ENCODE measurements at regions of chr9 and their contacts with region 1.

Region 1: GRCh38 chr9:89701221-89701798 is 96.5 kb downstream of the GADD45G start:
- DNase-seq: peak; percentile 15 to 91 (median 42)
- ATAC-seq: peak; percentile 92
- H3K4me3 ChIP-seq: peak overlapping the region; percentile 28
- H3K4me3 Mint-ChIP-seq: peak overlapping the region; percentile 46
- H3K27ac ChIP-seq: peak overlapping the region in 1 of 2 donors; percentile 36
- H3K27ac Mint-ChIP-seq: peak overlapping the region; percentile 44
- H3K4me1 ChIP-seq: peaks cover 21% of the 10 kb centered on the region
- H3K4me1 Mint-ChIP-seq: peaks cover 16% of the 10 kb centered on the region
- H3K27me3 ChIP-seq: no peaks in the 10 kb centered on the region
- H3K27me3 Mint-ChIP-seq: no peaks in the 10 kb centered on the region
- CTCF ChIP-seq: no peak

Region 2: GRCh38 chr9:89732295-89732938 is 31.1 kb after region 1 on chr9:
- CTCF ChIA-PET with region 1: no interaction called
- POLR2A ChIA-PET with region 1: no interaction called
- intact Hi-C with region 1: no loop called
- DNase-seq: no peak
- ATAC-seq: no peak
- H3K4me3 ChIP-seq: no peak overlapping the region
- H3K4me3 Mint-ChIP-seq: no peak overlapping the region
- H3K27ac ChIP-seq: no peak overlapping the region
- H3K27ac Mint-ChIP-seq: no peak overlapping the region
- H3K4me1 ChIP-seq: peaks cover 10% of the 10 kb centered on the region
- H3K4me1 Mint-ChIP-seq: peaks cover 6% of the 10 kb centered on the region
- H3K27me3 ChIP-seq: no peaks in the 10 kb centered on the region
- H3K27me3 Mint-ChIP-seq: no peaks in the 10 kb centered on the region
- CTCF ChIP-seq: no peak

Region 3: DNA sequence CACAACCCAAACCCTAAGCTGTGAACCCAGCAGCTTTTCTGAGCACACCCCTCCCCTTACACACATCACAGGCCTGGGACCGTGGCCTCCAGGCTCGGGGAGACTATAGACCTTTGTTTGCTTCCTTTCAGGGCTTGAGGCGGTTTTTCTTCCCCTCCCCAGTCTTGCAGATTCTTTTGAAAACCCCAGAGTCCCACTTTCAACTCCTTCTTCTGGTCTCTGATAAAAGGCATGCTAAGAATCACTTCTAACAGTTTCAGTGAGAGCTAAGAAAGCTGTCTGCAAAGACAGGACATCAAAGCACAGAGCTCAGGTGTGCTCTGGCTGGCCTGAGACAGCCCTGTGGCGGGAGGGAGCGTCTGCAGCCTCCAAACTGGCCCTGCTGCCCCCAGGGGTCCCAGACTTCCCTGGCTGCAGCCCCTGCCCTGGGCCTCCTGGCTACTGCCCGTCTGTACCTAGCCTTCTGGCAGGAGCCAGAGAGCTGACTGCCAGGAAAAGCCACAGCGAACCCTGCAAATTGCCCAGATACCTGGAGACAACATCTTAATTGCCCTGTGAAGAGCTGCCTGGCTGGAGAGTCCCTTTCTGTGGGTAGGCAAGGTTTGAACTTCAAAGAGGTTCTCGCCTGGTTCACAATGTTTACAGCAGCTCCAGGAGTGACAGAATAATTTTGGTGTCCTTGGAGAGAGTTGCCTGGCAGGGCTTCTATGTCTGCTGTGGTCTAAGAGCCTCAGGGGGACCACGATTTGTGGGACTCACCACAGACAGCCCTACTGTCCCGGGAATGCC is 42.5 kb after region 1 on chr9:
- CTCF ChIA-PET with region 1: no interaction called
- POLR2A ChIA-PET with region 1: interaction called, 6 read pairs
- intact Hi-C with region 1: loop called in 1 of 2 experiments (anchors 5 kb)
- DNase-seq: peak; percentile 40 to 87 (median 55)
- ATAC-seq: peak; percentile 81
- H3K4me3 ChIP-seq: peak overlapping the region; percentile 22
- H3K4me3 Mint-ChIP-seq: peak overlapping the region; percentile 72
- H3K27ac ChIP-seq: peak overlapping the region; percentile 17 to 64
- H3K27ac Mint-ChIP-seq: peak overlapping the region; percentile 74
- H3K4me1 ChIP-seq: peaks cover 91% of the 10 kb centered on the region
- H3K4me1 Mint-ChIP-seq: peaks cover 85% of the 10 kb centered on the region
- H3K27me3 ChIP-seq: no peaks in the 10 kb centered on the region
- H3K27me3 Mint-ChIP-seq: no peaks in the 10 kb centered on the region
- CTCF ChIP-seq: no peak